ENCODE measurements at regions of chr6 and their contacts with region 1.

Region 1: GRCh38 chr6:29964887-29965562 is 22.7 kb downstream of the HLA-A start:
- DNase-seq: peak; percentile 55 to 93 (median 74)
- ATAC-seq: peak; percentile 94
- H3K4me3 ChIP-seq: peak overlapping the region; percentile 22 to 44
- H3K4me3 Mint-ChIP-seq: peak overlapping the region; percentile 67
- H3K27ac ChIP-seq: peak overlapping the region; percentile 29 to 82
- H3K27ac Mint-ChIP-seq: peak overlapping the region; percentile 73
- H3K4me1 ChIP-seq: peaks cover 30% of the 10 kb centered on the region
- H3K4me1 Mint-ChIP-seq: peaks cover 25% of the 10 kb centered on the region
- H3K27me3 ChIP-seq: no peaks in the 10 kb centered on the region
- H3K27me3 Mint-ChIP-seq: no peaks in the 10 kb centered on the region
- CTCF ChIP-seq: no peak

Region 2: DNA sequence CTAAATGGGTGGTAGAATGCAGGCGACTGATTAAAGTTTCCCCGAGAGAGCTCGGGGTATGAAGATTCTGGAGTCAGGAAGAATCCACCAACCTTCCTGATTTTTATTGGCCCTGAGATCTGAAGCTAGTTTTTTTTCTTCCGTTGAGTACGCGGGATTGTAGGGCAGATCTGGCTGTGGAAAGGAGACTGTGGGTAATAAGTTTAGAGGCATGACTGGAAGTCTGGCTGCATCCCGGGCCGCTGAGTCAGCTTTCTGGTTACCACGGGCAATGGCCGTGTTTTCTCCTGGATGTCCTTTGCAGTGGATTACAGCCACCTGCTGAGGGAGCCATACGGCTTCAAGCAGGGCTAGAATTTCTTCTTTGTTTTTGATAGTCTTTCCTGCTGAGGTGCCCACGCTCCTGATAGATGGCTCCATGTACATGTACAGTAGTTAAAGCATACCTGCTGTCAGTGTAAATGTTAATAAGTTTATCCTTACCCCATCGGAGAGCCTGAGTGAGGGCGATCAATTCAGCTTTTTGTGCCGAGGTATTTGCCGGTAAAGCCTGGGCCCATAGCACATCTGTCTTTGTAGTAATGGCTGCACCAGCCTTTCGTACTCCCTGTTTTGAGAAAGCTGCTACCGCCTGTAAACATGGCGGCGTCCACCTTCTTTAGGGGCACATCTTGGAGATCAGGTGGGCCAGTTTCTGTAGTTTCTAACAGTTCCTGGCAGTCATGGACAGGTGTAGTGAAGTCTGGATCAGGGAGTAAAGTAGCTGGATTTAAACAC is 1195.2 kb before region 1 on chr6:
- CTCF ChIA-PET with region 1: no interaction called
- POLR2A ChIA-PET with region 1: no interaction called
- intact Hi-C with region 1: no loop called
- DNase-seq: no peak
- ATAC-seq: no peak
- H3K4me3 ChIP-seq: no peak overlapping the region
- H3K4me3 Mint-ChIP-seq: no peak overlapping the region
- H3K27ac ChIP-seq: no peak overlapping the region
- H3K27ac Mint-ChIP-seq: no peak overlapping the region
- H3K4me1 ChIP-seq: no peaks in the 10 kb centered on the region
- H3K4me1 Mint-ChIP-seq: peaks cover 6% of the 10 kb centered on the region
- H3K27me3 ChIP-seq: peaks cover 40 to 60% of the 10 kb centered on the region in 2 experiments
- H3K27me3 Mint-ChIP-seq: peaks cover 97% of the 10 kb centered on the region
- CTCF ChIP-seq: no peak

Region 3: DNA sequence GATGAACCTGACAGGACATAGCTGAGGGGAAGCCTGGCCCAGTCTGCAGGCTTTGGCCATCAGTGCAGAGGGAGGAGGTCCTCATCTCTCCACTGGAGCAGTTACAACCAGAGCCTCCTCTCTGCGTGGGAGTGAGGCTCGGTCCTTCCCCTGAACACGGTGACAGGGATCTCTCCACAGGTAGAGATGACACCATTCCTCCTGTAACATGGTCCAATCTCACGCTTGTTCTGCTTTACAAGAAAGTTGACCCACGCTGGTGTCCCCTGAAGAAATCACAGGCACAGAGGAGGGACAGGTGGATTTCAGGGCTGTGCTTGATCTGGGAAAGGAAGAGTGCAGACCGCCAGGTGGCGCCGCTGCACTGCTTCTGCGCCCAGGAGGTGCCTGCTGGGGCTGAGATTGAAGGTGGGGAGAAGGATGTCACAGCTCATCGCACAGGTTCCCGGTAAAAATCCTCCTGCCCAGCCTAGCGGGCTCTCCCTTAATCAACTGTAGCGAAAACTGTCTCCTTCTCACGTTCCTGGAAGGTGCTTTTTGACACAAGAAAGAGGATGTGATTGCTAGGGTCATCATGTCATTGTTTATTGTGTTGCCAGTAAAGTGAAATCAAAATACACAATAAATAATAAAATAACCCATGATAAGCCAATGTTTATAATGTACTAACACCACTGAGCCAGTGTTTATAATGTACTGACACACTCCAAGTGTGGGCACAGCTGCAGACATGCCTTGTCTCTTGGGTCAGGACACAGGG is 117.0 kb before region 1 on chr6:
- CTCF ChIA-PET with region 1: interaction called, 11 read pairs
- POLR2A ChIA-PET with region 1: no interaction called
- intact Hi-C with region 1: loop called in 1 of 2 experiments (anchors 1 kb)
- DNase-seq: peak; percentile 74 to 94 (median 85)
- ATAC-seq: peak; percentile 86
- H3K4me3 ChIP-seq: no peak overlapping the region
- H3K4me3 Mint-ChIP-seq: no peak overlapping the region
- H3K27ac ChIP-seq: no peak overlapping the region
- H3K27ac Mint-ChIP-seq: no peak overlapping the region
- H3K4me1 ChIP-seq: peaks cover 3% of the 10 kb centered on the region
- H3K4me1 Mint-ChIP-seq: peaks cover 8% of the 10 kb centered on the region
- H3K27me3 ChIP-seq: peaks cover 11 to 23% of the 10 kb centered on the region in 2 experiments
- H3K27me3 Mint-ChIP-seq: peaks cover 58% of the 10 kb centered on the region
- CTCF ChIP-seq: peak; percentile 97

Region 4: DNA sequence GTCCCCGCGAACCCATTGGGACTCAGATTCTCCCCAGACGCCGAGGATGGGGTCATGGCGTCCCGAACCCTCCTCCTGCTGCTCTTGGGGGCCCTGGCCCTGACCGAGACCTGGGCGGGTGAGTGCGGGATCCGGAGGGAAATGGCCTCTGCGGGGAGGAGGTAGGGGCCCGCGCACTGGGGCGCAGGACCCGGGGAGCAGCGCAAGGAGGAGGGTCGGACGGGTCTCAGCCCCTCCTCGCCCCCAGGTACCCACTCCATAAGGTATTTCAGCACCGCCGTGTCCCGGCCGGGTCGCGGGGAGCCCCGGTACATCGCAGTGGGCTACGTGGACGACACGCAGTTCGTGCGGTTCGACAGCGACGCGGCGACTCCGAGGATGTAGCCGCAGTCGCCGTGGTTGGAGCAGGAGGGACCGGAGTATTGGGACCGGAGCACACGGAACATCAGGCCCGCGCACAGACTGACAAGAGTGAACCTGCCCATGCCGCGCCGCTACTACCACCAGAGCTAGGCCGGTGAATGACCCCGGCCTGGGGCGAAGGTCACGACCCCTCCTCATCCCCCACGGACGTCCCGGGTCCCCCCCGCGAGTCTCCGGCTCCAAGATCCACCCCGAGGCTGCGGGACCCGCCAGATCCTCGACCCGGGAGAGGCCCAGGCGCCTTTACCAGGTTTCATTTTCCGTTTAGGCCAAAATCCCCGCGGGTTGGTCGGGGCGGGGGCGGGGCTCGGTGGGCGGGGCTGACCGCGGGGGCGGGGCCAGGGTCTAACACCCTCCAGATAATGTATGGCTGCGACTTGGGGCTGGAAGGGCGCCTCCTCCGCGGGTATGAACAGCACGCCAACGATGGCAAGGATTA is 38.4 kb before region 1 on chr6:
- CTCF ChIA-PET with region 1: no interaction called
- POLR2A ChIA-PET with region 1: no interaction called
- intact Hi-C with region 1: loop called in 1 of 2 experiments (anchors 1 kb)
- DNase-seq: peak; percentile 65 to 93 (median 83)
- ATAC-seq: peak; percentile 93
- H3K4me3 ChIP-seq: peak overlapping the region; percentile 88 to 93
- H3K4me3 Mint-ChIP-seq: peak overlapping the region; percentile 83
- H3K27ac ChIP-seq: peak overlapping the region; percentile 92 to 99
- H3K27ac Mint-ChIP-seq: peak overlapping the region; percentile 94
- H3K4me1 ChIP-seq: peaks cover 8% of the 10 kb centered on the region
- H3K4me1 Mint-ChIP-seq: peaks cover 32% of the 10 kb centered on the region
- H3K27me3 ChIP-seq: no peaks in the 10 kb centered on the region
- H3K27me3 Mint-ChIP-seq: no peaks in the 10 kb centered on the region
- CTCF ChIP-seq: no peak

Region 5: GRCh38 chr6:29948277-29948676 is 16.7 kb before region 1 on chr6:
- CTCF ChIA-PET with region 1: no interaction called
- POLR2A ChIA-PET with region 1: interaction called, 12 read pairs
- intact Hi-C with region 1: loop called in 1 of 2 experiments (anchors 2 kb)
- DNase-seq: peak in 1 of 9 experiments; percentile 30
- ATAC-seq: no peak
- H3K4me3 ChIP-seq: no peak overlapping the region
- H3K4me3 Mint-ChIP-seq: peak overlapping the region; percentile 20
- H3K27ac ChIP-seq: no peak overlapping the region
- H3K27ac Mint-ChIP-seq: peak overlapping the region; percentile 45
- H3K4me1 ChIP-seq: peaks cover 57% of the 10 kb centered on the region
- H3K4me1 Mint-ChIP-seq: peaks cover 75% of the 10 kb centered on the region
- H3K27me3 ChIP-seq: no peaks in the 10 kb centered on the region
- H3K27me3 Mint-ChIP-seq: no peaks in the 10 kb centered on the region
- CTCF ChIP-seq: no peak

Region 6: GRCh38 chr6:30013291-30013922 is 48.4 kb after region 1 on chr6:
- CTCF ChIA-PET with region 1: interaction called, 5 read pairs
- POLR2A ChIA-PET with region 1: interaction called, 3 read pairs
- intact Hi-C with region 1: loop called in 1 of 2 experiments (anchors 10 kb)
- DNase-seq: peak in 7 of 9 experiments; percentile 17 to 58 (median 52)
- ATAC-seq: no peak
- H3K4me3 ChIP-seq: no peak overlapping the region
- H3K4me3 Mint-ChIP-seq: no peak overlapping the region
- H3K27ac ChIP-seq: no peak overlapping the region
- H3K27ac Mint-ChIP-seq: no peak overlapping the region
- H3K4me1 ChIP-seq: no peaks in the 10 kb centered on the region
- H3K4me1 Mint-ChIP-seq: no peaks in the 10 kb centered on the region
- H3K27me3 ChIP-seq: peaks cover 0 to 2% of the 10 kb centered on the region in 2 experiments
- H3K27me3 Mint-ChIP-seq: no peaks in the 10 kb centered on the region
- CTCF ChIP-seq: no peak